ENCODE measurements at regions of chr12 and their contacts with region 1.

Region 1: GRCh38 chr12:116325336-116325664 is 47.8 kb upstream of the MED13L start:
- DNase-seq: peak; percentile 76
- ATAC-seq: peak; percentile 88
- H3K4me3 ChIP-seq: peak overlapping the region in 1 of 5 experiments; percentile 22
- H3K4me3 Mint-ChIP-seq: peak overlapping the region; percentile 14
- H3K27ac ChIP-seq: peak overlapping the region; percentile 52 to 70
- H3K27ac Mint-ChIP-seq: peak overlapping the region; percentile 96
- H3K4me1 ChIP-seq: peaks cover 31 to 37% of the 10 kb centered on the region in 2 donors
- H3K4me1 Mint-ChIP-seq: peaks cover 30% of the 10 kb centered on the region
- H3K27me3 ChIP-seq: no peaks in the 10 kb centered on the region
- H3K27me3 Mint-ChIP-seq: no peaks in the 10 kb centered on the region
- CTCF ChIP-seq: no peak

Region 2: GRCh38 chr12:115946867-115947696 is 378.2 kb before region 1 on chr12:
- CTCF ChIA-PET with region 1: no interaction called
- POLR2A ChIA-PET with region 1: no interaction called
- intact Hi-C with region 1: no loop called
- DNase-seq: no peak
- ATAC-seq: no peak
- H3K4me3 ChIP-seq: no peak overlapping the region
- H3K4me3 Mint-ChIP-seq: no peak overlapping the region
- H3K27ac ChIP-seq: no peak overlapping the region
- H3K27ac Mint-ChIP-seq: no peak overlapping the region
- H3K4me1 ChIP-seq: no peaks in the 10 kb centered on the region
- H3K4me1 Mint-ChIP-seq: no peaks in the 10 kb centered on the region
- H3K27me3 ChIP-seq: no peaks in the 10 kb centered on the region
- H3K27me3 Mint-ChIP-seq: no peaks in the 10 kb centered on the region
- CTCF ChIP-seq: no peak

Region 3: GRCh38 chr12:116336542-116337065 is 11.3 kb after region 1 on chr12:
- CTCF ChIA-PET with region 1: interaction called, 4 read pairs
- POLR2A ChIA-PET with region 1: interaction called, 8 read pairs
- intact Hi-C with region 1: loop called (anchors 1 kb)
- DNase-seq: peak; percentile 94
- ATAC-seq: peak; percentile 90
- H3K4me3 ChIP-seq: peak overlapping the region in 2 of 5 experiments; percentile 18 to 35
- H3K4me3 Mint-ChIP-seq: peak overlapping the region; percentile 78
- H3K27ac ChIP-seq: peak overlapping the region; percentile 55 to 78
- H3K27ac Mint-ChIP-seq: peak overlapping the region; percentile 89
- H3K4me1 ChIP-seq: peaks cover 56 to 84% of the 10 kb centered on the region in 2 donors
- H3K4me1 Mint-ChIP-seq: peaks cover 70% of the 10 kb centered on the region
- H3K27me3 ChIP-seq: no peaks in the 10 kb centered on the region
- H3K27me3 Mint-ChIP-seq: no peaks in the 10 kb centered on the region
- CTCF ChIP-seq: peak; percentile 15